ENCODE measurements at regions of chr7 and their contacts with region 1.

Region 1: GRCh38 chr7:39453743-39454355 is 112.4 kb upstream of the YAE1 start:
- DNase-seq: peak; percentile 77
- ATAC-seq: peak; percentile 87
- H3K4me3 Mint-ChIP-seq: no peak overlapping the region
- H3K27ac Mint-ChIP-seq: no peak overlapping the region
- H3K4me1 Mint-ChIP-seq: no peaks in the 10 kb centered on the region
- H3K27me3 Mint-ChIP-seq: peaks cover 4% of the 10 kb centered on the region

Region 2: DNA sequence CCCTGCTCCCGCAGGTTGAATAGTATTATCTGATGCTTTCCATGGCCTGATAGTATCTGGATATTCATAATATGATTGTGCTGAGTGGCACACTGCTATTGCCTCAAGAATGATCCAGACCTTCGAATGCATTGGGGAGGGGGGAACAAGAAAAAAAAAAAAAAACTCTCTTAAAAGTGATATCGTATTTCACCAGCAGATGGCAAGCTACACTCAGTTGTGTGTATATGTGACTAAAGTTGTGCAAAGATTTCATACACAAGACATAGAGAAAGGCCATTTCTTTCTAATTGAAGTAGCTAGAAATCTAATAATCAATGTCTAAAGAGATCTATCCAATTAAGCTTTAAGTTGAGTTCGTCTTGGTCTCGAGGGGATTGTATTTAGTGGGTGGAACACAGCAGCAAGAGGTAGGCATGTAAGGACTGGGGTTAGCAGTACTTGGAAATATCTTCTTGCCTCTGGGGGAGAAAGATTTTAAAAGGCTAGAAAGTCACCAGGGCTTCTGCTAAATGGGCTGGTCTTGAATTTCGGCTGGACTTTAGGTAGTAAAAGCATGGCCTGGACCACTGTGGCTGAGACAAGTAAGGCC is 1552.5 kb before region 1 on chr7:
- CTCF ChIA-PET with region 1: no interaction called
- POLR2A ChIA-PET with region 1: no interaction called
- intact Hi-C with region 1: no loop called
- DNase-seq: no peak
- ATAC-seq: peak; percentile 44
- H3K4me3 Mint-ChIP-seq: no peak overlapping the region
- H3K27ac Mint-ChIP-seq: no peak overlapping the region
- H3K4me1 Mint-ChIP-seq: no peaks in the 10 kb centered on the region
- H3K27me3 Mint-ChIP-seq: peaks cover 2% of the 10 kb centered on the region

Region 3: GRCh38 chr7:39299695-39300094 is 154.2 kb before region 1 on chr7:
- CTCF ChIA-PET with region 1: no interaction called
- POLR2A ChIA-PET with region 1: no interaction called
- intact Hi-C with region 1: no loop called
- DNase-seq: no peak
- ATAC-seq: no peak
- H3K4me3 Mint-ChIP-seq: no peak overlapping the region
- H3K27ac Mint-ChIP-seq: no peak overlapping the region
- H3K4me1 Mint-ChIP-seq: no peaks in the 10 kb centered on the region
- H3K27me3 Mint-ChIP-seq: peaks cover 8% of the 10 kb centered on the region

Region 4: GRCh38 chr7:39433550-39433949 is 20.3 kb before region 1 on chr7:
- CTCF ChIA-PET with region 1: interaction called, 29 read pairs
- POLR2A ChIA-PET with region 1: no interaction called
- intact Hi-C with region 1: no loop called
- DNase-seq: no peak
- ATAC-seq: no peak
- H3K4me3 Mint-ChIP-seq: no peak overlapping the region
- H3K27ac Mint-ChIP-seq: no peak overlapping the region
- H3K4me1 Mint-ChIP-seq: no peaks in the 10 kb centered on the region
- H3K27me3 Mint-ChIP-seq: peaks cover 2% of the 10 kb centered on the region

Region 5: GRCh38 chr7:39465055-39465929 is 11.4 kb after region 1 on chr7:
- CTCF ChIA-PET with region 1: interaction called, 35 read pairs
- POLR2A ChIA-PET with region 1: no interaction called
- intact Hi-C with region 1: no loop called
- DNase-seq: peak; percentile 68
- ATAC-seq: peak; percentile 86
- H3K4me3 Mint-ChIP-seq: no peak overlapping the region
- H3K27ac Mint-ChIP-seq: no peak overlapping the region
- H3K4me1 Mint-ChIP-seq: peaks cover 2% of the 10 kb centered on the region
- H3K27me3 Mint-ChIP-seq: peaks cover 7% of the 10 kb centered on the region

Region 6: DNA sequence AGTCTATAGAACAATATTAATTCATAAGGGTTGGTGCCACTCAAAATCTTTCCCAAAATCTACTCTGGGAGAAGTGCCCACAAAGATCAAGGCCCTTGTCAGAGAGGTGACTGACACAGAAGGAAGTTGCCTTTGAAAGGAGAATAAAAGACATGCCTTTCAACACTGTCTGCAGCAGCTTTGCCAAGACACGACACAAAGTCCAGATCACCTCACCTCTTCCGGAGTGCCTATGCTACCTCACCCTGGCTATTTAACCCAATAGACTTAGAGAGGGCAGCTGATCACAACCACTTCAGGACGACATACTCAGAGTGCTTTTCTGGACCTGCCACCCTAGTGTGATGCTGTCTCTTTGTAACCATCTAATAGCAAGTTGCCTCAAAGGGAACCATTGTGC is 63.4 kb after region 1 on chr7:
- CTCF ChIA-PET with region 1: interaction called, 12 read pairs
- POLR2A ChIA-PET with region 1: no interaction called
- intact Hi-C with region 1: loop called (anchors 1 kb)
- DNase-seq: no peak
- ATAC-seq: no peak
- H3K4me3 Mint-ChIP-seq: no peak overlapping the region
- H3K27ac Mint-ChIP-seq: no peak overlapping the region
- H3K4me1 Mint-ChIP-seq: no peaks in the 10 kb centered on the region
- H3K27me3 Mint-ChIP-seq: peaks cover 1% of the 10 kb centered on the region

Measured in activated CD4-positive, alpha-beta T cell treated with anti-CD3 and anti-CD28 coated beads for 36 hours (primary cell).